Ovary (tissue), 10 donors: ENCODE measurements at regions of chrX and their contacts with region 1.

Region 1: DNA sequence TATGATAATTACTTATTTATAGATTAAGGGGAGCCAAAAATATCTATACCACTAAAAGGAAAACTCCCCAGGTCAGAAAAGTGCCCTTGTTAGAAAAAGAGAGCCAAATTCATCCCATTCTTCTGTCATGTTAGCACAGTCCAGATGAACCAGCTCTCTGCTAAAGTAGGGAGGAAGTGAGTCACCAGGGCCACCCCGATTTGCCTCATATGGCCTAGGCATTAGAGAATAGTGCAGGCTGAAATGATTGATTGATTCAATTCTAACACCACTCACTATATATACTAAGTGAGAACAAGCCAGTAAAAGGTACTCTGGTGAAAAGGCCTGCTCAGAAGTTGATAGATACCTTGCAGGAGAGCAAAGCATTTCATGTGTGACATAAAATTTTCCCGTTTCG is 94.5 kb downstream of the SRPX start:
- DNase-seq: no peak
- H3K4me3 ChIP-seq: no peak overlapping the region
- H3K27ac ChIP-seq: no peak overlapping the region
- H3K4me1 ChIP-seq: no peaks in the 10 kb centered on the region
- H3K27me3 ChIP-seq: no peaks in the 10 kb centered on the region
- CTCF ChIP-seq: no peak
- EP300 ChIP-seq: no peak
- POLR2A ChIP-seq: no peak

Region 2: DNA sequence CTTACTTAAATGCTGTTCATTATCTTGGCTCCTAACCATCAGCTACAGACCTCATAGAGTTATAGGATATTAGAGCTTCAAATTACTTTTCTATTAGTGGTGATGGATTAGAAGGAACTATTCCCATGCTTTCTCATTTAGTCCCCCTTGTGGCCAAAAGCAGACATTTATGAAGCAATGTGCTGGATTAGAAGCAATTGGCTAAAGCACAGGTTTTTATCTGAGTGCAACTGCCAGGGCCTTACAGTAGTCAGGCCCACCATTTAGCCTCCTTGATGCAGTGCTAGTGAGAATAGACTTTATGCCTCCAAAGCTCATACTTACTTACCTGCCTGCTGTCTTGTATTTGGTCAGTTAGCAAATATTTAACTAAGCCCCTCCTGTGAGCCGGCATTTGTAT is 528.1 kb after region 1 on chrX:
- intact Hi-C with region 1: loop called in 1 of 4 experiments (anchors 10 kb)
- DNase-seq: no peak
- H3K4me3 ChIP-seq: no peak overlapping the region
- H3K27ac ChIP-seq: no peak overlapping the region
- H3K4me1 ChIP-seq: no peaks in the 10 kb centered on the region
- H3K27me3 ChIP-seq: no peaks in the 10 kb centered on the region
- CTCF ChIP-seq: no peak
- EP300 ChIP-seq: no peak
- POLR2A ChIP-seq: no peak